SK-N-SH (cell line): ENCODE measurements at regions of chr7 and their contacts with region 1.

Region 1: GRCh38 chr7:85023045-85023712 is 163.7 kb downstream of the SEMA3D start:
- DNase-seq: no peak
- H3K4me3 ChIP-seq: peak overlapping the region in 1 of 2 experiments; percentile 10; a peak in 1 of 4 replicates
- H3K27ac ChIP-seq: no peak overlapping the region
- H3K4me1 ChIP-seq: peaks cover 0 to 12% of the 10 kb centered on the region in 2 experiments; a peak in 3 of 4 replicates
- H3K27me3 ChIP-seq: no peaks in the 10 kb centered on the region
- CTCF ChIP-seq: peak; percentile 93
- EP300 ChIP-seq: no peak
- RAD21 ChIP-seq: peak; percentile 98

Region 2: GRCh38 chr7:83976295-83976694 is 1046.9 kb before region 1 on chr7:
- CTCF ChIA-PET with region 1: interaction called, 12 read pairs
- POLR2A ChIA-PET with region 1: no interaction called
- DNase-seq: peak; percentile 57
- H3K4me3 ChIP-seq: no peak overlapping the region
- H3K27ac ChIP-seq: peak overlapping the region in 1 of 2 experiments; percentile 14; a peak in 1 of 4 replicates
- H3K4me1 ChIP-seq: no peaks in the 10 kb centered on the region; a peak in 1 of 4 replicates
- H3K27me3 ChIP-seq: no peaks in the 10 kb centered on the region
- CTCF ChIP-seq: peak; percentile 93
- EP300 ChIP-seq: peak in 1 of 2 experiments; percentile 33; a peak in 1 of 4 replicates
- RAD21 ChIP-seq: peak; percentile 99

Region 3: GRCh38 chr7:83983606-83984005 is 1039.6 kb before region 1 on chr7:
- CTCF ChIA-PET with region 1: interaction called, 10 read pairs
- POLR2A ChIA-PET with region 1: no interaction called
- DNase-seq: no peak
- H3K4me3 ChIP-seq: no peak overlapping the region
- H3K27ac ChIP-seq: no peak overlapping the region
- H3K4me1 ChIP-seq: no peaks in the 10 kb centered on the region; a peak in 2 of 4 replicates
- H3K27me3 ChIP-seq: no peaks in the 10 kb centered on the region
- CTCF ChIP-seq: no peak
- EP300 ChIP-seq: no peak
- RAD21 ChIP-seq: no peak

Region 4: GRCh38 chr7:84799106-84799505 is 224.1 kb before region 1 on chr7:
- CTCF ChIA-PET with region 1: no interaction called
- POLR2A ChIA-PET with region 1: no interaction called
- DNase-seq: no peak
- H3K4me3 ChIP-seq: no peak overlapping the region
- H3K27ac ChIP-seq: no peak overlapping the region
- H3K4me1 ChIP-seq: no peaks in the 10 kb centered on the region
- H3K27me3 ChIP-seq: no peaks in the 10 kb centered on the region
- CTCF ChIP-seq: no peak
- EP300 ChIP-seq: no peak
- RAD21 ChIP-seq: no peak

Region 5: DNA sequence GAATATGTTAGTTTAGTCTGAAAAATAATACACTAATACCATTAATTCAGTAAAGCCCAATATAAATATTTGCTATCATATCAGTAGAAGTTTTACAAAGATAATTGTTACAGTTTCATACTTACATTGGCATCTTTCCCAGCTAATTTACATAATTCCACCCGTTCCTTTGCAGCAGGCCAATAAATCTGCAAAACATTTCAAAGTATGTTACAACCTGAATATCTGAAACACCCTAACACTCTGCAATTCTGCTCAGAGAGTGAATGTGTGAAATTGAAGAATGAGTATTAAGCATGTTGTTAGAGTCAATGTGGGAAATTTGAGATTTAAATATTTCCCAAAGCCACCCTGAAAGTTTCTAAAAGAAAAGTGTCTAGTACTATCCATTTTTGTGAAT is 58.2 kb after region 1 on chr7:
- CTCF ChIA-PET with region 1: no interaction called
- POLR2A ChIA-PET with region 1: no interaction called
- DNase-seq: no peak
- H3K4me3 ChIP-seq: no peak overlapping the region
- H3K27ac ChIP-seq: no peak overlapping the region
- H3K4me1 ChIP-seq: no peaks in the 10 kb centered on the region; a peak in 1 of 4 replicates
- H3K27me3 ChIP-seq: no peaks in the 10 kb centered on the region
- CTCF ChIP-seq: no peak
- EP300 ChIP-seq: no peak
- RAD21 ChIP-seq: no peak